Dendritic cell treated with granulocyte-macrophage colony-stimulating factor and Interleukin-4, amounts not matched to agents 40 ng/mL and 50 ng/mL, for 4 days (primary cell): ENCODE measurements at regions of chr3 and their contacts with region 1.

Region 1: DNA sequence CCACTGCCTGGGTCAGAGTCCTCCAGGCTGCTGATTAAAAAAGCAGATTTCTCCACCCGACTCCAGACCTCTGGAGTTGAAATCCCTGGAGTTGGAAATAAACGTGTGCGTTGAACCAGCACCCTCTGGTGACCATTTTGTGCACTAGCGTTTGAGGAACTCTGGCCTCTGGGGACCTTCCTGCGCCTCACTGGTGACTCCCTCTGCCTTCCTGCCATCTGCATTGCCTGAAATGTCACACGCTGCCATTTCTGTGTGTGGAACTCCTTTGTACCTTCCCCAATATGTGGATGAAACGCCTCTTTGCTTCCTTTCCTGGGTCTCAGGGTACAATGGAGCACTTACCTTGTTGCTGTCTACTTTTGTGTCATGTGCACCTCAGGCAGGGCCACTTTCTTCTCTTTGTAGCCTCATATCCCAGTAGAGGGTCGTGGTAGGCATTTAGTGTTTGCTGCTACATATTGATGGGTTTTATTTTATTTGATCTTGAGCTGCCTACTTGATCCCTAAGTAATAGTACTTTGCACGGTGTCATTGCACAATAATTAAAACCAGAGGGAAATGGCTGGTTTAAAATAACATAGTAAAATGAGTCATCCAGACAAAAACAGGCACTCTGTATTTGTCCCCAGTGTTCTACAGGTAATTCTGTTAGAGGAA is 56.8 kb downstream of the GPR171 start:
- H3K4me3 Mint-ChIP-seq: no peak overlapping the region
- H3K27ac Mint-ChIP-seq: no peak overlapping the region
- H3K4me1 Mint-ChIP-seq: no peaks in the 10 kb centered on the region
- H3K27me3 Mint-ChIP-seq: peaks cover 8% of the 10 kb centered on the region

Region 2: GRCh38 chr3:150528354-150528797 is 617.8 kb before region 1 on chr3:
- intact Hi-C with region 1: loop called (anchors 10 kb)
- H3K4me3 Mint-ChIP-seq: no peak overlapping the region
- H3K27ac Mint-ChIP-seq: no peak overlapping the region
- H3K4me1 Mint-ChIP-seq: no peaks in the 10 kb centered on the region
- H3K27me3 Mint-ChIP-seq: peaks cover 7% of the 10 kb centered on the region

Region 3: GRCh38 chr3:150567328-150567727 is 578.9 kb before region 1 on chr3:
- intact Hi-C with region 1: no loop called
- H3K4me3 Mint-ChIP-seq: no peak overlapping the region
- H3K27ac Mint-ChIP-seq: no peak overlapping the region
- H3K4me1 Mint-ChIP-seq: no peaks in the 10 kb centered on the region
- H3K27me3 Mint-ChIP-seq: no peaks in the 10 kb centered on the region

Region 4: DNA sequence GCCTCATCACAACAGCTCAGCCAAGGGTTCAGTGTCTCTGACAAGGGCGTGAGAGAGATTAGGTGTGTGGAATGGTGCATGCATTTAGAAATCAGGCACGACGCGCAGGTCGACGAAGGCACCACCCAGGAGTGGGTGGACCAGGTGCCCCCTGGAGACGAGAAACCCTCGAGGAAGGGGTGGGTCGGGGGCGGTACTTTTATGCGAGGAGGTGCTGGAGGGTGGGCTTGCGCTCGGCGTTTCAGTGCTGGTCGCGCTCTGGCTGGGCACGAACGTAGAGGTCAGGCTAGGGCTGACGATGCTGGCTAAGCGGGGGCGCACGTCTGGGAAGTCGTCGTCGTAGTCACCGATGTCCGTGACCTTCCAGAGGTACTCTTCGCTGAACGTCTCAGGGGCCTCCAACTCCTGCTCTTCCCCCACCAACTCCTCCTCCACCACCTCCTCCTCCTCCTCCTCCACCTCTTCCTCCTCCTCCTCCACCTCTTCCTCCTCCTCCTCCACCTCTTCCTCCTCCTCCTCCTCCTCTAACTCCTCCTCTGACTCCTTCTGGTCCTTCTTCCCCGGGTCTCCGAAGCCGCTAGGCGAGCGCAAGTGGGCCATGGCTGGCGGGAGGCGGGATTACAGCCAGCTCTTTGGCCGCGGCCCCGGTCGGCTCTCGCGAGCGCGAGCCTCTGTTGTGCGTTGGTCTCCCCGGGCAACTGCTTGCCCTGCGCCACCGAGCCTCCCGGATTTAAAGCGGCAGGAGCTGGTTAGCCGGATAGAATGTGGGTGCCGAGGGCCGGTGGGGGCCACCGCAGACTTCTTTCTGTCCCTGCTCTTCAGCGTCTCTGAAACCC is 442.7 kb before region 1 on chr3 and contains the start of gene ERICH6:
- intact Hi-C with region 1: no loop called
- H3K4me3 Mint-ChIP-seq: peak within 1 kb of the TSS; percentile 91
- H3K27ac Mint-ChIP-seq: peak within 1 kb of the TSS; percentile 96
- H3K4me1 Mint-ChIP-seq: peaks cover 23% of the 10 kb centered on the region
- H3K27me3 Mint-ChIP-seq: no peaks in the 10 kb centered on the region

Region 5: GRCh38 chr3:150721285-150722130 is 424.7 kb before region 1 on chr3:
- intact Hi-C with region 1: loop called (anchors 2 kb)
- H3K4me3 Mint-ChIP-seq: no peak overlapping the region
- H3K27ac Mint-ChIP-seq: no peak overlapping the region
- H3K4me1 Mint-ChIP-seq: peaks cover 9% of the 10 kb centered on the region
- H3K27me3 Mint-ChIP-seq: no peaks in the 10 kb centered on the region

Region 6: GRCh38 chr3:150787741-150788370 is 358.3 kb before region 1 on chr3:
- intact Hi-C with region 1: loop called (anchors 1 kb)
- H3K4me3 Mint-ChIP-seq: no peak overlapping the region
- H3K27ac Mint-ChIP-seq: no peak overlapping the region
- H3K4me1 Mint-ChIP-seq: peaks cover 5% of the 10 kb centered on the region
- H3K27me3 Mint-ChIP-seq: peaks cover 12% of the 10 kb centered on the region

Region 7: DNA sequence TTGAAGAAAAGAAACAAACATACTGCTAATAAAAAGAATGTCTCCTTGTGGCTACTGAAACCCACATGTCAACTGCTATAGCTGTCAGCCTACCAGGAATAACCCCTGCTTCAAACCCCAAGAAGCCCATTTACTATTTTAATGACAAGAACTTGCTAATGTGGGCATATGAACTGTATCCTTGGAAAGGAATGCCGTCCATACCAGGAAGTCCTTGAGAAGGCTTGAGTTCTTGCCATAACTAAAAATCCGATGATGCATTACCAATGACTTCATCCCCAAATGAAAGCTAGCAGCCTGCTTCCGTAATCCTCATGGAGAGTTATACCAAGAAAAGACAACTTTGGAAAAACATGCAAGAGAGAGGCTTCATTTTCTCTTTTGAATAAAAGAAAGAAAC is 275.8 kb before region 1 on chr3:
- intact Hi-C with region 1: loop called (anchors 5 kb)
- H3K4me3 Mint-ChIP-seq: no peak overlapping the region
- H3K27ac Mint-ChIP-seq: no peak overlapping the region
- H3K4me1 Mint-ChIP-seq: peaks cover 9% of the 10 kb centered on the region
- H3K27me3 Mint-ChIP-seq: peaks cover 4% of the 10 kb centered on the region

Region 8: GRCh38 chr3:151067158-151067557 is 79.0 kb before region 1 on chr3:
- intact Hi-C with region 1: loop called (anchors 5 kb)
- H3K4me3 Mint-ChIP-seq: no peak overlapping the region
- H3K27ac Mint-ChIP-seq: no peak overlapping the region
- H3K4me1 Mint-ChIP-seq: no peaks in the 10 kb centered on the region
- H3K27me3 Mint-ChIP-seq: no peaks in the 10 kb centered on the region

Region 9: DNA sequence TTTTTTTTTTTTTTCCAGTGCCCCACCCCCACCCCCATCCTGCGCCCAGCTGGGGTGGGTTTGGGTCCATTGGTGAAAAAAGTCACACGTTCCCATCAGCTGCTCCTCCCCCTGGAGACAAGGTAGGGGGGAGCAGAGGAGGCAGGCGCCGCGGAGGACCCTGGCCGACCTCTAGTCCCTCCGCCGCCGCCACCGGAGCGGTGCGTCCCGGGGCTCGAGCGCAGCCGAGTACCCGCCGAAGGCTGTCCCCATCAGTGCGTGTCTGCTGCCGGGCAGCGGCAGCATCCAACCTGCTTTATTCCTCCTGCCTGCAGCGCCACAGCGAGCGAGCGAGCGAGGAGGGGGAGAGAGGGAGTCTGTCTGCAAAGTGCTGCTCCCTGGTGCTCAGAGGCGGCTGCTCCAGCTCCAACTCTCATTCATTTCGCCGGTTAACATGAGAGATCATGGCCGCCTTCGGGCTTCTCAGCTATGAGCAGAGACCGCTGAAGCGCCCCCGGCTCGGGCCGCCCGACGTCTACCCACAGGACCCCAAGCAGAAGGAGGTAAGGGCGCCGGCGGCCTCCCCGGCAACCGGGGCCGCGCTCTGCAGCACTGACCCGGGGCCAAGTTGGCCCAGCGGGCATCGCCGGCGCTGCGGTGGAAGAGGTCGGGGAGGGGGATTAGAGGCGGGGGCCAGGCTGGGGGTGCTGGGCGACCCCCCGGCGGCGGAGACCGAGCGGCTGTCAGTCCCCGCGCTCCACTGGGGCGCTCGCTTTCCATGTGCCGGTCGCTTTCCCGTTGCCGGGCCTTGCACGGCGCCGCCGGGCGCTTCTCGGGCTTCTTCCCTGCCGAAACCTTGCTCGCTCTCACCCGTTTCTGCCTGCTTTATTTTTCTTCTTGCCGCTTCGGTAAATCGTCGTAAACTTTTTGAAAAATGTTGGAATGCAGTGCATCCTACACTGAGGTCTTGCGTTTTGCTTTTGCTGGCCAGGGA is 59.4 kb before region 1 on chr3:
- intact Hi-C with region 1: no loop called
- H3K4me3 Mint-ChIP-seq: peak overlapping the region; percentile 90
- H3K27ac Mint-ChIP-seq: peak overlapping the region; percentile 24
- H3K4me1 Mint-ChIP-seq: peaks cover 23% of the 10 kb centered on the region
- H3K27me3 Mint-ChIP-seq: peaks cover 59% of the 10 kb centered on the region

Region 10: DNA sequence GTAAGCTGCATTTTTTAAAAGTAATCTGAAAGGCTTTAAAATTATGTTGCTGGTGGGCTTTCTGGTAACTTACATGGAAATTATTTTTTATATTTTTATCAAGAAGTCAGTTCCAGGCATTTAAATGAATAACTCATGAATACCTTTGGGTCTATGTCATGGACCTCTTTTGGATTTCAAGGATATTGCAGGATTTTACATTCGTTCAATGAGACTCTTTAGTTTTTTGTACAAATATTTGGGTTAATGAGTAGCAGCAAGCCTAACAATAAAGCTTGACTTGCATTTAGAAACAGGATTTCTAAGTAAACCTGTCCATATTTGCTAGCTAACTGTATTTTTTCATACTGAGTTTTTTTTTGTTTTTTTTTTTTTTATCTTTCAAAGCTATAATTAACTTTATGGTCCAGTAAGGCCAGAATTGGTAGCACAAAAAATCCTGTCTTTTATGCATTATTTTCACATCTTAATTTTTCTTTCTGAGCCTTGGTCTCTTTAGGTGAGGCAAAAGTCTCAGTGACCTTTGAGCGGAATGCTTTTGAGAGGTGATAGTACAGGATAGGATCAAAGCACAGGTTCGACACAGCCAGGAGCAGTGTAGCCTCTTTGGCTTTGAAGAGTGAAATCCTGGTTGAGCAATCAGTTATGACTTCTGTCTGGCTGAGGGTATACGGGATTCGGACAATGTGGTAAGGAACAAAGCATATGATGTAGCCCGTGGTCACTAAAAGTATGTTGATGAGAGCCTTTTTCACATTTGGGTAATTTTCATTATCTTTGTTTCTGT is 52.0 kb after region 1 on chr3:
- intact Hi-C with region 1: no loop called
- H3K4me3 Mint-ChIP-seq: no peak overlapping the region
- H3K27ac Mint-ChIP-seq: no peak overlapping the region
- H3K4me1 Mint-ChIP-seq: peaks cover 7% of the 10 kb centered on the region
- H3K27me3 Mint-ChIP-seq: no peaks in the 10 kb centered on the region